Lower leg skin (tissue), 4 donors: ENCODE measurements at regions of chr17 and their contacts with region 1.

Region 1: DNA sequence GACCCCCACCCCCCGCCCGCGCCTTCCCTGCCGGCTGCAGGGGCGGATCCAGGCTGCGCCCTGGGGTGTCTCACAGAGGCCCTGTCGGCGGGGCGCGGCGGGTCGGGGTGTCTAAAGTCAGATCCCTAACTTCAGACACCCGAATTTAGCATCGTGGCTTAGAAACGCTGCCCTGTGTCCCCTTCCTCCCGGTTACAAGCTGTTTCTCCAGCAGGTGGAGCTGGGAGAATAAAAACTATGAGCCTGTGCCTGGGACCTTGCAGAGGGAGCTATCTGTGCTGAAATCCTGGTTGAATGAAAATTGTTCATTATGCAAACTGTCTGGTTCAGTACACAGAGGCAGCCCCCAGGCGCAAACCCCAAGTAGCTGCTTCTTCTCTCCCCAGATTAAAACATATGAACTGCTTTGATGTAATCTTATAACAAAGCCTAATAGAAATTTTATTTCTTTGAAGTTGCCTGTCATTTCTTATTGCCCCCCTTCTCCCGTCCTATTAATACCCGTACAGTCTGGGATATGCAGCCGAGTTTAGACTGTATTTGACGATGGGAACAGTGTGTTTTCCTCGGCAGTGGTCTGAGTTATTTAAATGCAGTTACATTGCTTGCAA is 79.0 kb downstream of the RPA1 start:
- DNase-seq: peak; percentile 51 to 89
- H3K4me3 ChIP-seq: no peak overlapping the region
- CTCF ChIP-seq: no peak
- POLR2A ChIP-seq: no peak

Region 2: GRCh38 chr17:1967213-1967612 is 58.4 kb after region 1 on chr17:
- intact Hi-C with region 1: no loop called
- DNase-seq: no peak
- H3K4me3 ChIP-seq: no peak overlapping the region
- CTCF ChIP-seq: no peak
- POLR2A ChIP-seq: no peak

Region 3: GRCh38 chr17:2029911-2030778 is 121.3 kb after region 1 on chr17 and contains the start of gene DPH1:
- intact Hi-C with region 1: loop called (anchors 5 kb)
- DNase-seq: peak; percentile 82 to 96
- H3K4me3 ChIP-seq: peak within 1 kb of the TSS; percentile 89
- CTCF ChIP-seq: no peak
- POLR2A ChIP-seq: no peak
- total RNA-seq, gene DPH1: 50.4 to 80.0 (median 61.2) TPM